Prostate gland (tissue), 2 donors: ENCODE measurements at regions of chr5 and their contacts with region 1.

Region 1: DNA sequence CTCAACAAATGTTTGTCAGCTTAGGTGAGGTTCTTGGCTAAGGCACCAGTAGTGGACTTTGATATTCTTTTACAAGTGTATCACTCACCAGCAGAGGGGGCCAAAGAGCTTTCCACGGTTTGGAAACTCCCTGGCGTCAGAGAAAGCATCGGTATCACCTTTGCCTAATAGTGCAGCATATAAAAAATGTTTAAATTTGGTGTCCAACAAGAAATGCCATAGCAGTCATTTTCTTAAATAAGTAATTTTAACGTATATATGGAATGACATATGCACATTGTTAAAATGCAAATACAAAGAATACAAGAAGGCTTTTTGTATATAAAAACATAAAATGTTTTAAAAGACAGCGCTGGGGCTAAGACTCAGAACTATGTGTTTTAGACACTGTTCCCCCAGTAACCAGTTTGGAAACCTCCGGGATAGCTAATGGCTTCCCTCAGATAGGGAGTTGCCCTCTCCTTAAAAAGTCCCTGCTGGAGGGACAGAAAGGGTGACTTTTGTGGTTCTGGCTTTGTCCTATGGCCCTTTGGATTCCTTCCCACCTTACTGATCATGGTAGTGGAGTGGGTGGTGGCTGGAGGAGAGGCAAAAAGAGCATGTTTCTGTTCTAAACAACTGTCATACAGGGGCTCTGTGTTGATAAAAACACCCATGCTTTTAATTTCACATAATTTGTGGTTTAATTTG is 124.6 kb downstream of the GPBP1 start:
- DNase-seq: peak; percentile 82
- H3K4me3 ChIP-seq: no peak overlapping the region
- H3K27ac ChIP-seq: no peak overlapping the region
- H3K4me1 ChIP-seq: no peaks in the 10 kb centered on the region
- H3K27me3 ChIP-seq: no peaks in the 10 kb centered on the region
- CTCF ChIP-seq: peak; percentile 68 to 84 (median 76)
- POLR2A ChIP-seq: no peak

Region 2: DNA sequence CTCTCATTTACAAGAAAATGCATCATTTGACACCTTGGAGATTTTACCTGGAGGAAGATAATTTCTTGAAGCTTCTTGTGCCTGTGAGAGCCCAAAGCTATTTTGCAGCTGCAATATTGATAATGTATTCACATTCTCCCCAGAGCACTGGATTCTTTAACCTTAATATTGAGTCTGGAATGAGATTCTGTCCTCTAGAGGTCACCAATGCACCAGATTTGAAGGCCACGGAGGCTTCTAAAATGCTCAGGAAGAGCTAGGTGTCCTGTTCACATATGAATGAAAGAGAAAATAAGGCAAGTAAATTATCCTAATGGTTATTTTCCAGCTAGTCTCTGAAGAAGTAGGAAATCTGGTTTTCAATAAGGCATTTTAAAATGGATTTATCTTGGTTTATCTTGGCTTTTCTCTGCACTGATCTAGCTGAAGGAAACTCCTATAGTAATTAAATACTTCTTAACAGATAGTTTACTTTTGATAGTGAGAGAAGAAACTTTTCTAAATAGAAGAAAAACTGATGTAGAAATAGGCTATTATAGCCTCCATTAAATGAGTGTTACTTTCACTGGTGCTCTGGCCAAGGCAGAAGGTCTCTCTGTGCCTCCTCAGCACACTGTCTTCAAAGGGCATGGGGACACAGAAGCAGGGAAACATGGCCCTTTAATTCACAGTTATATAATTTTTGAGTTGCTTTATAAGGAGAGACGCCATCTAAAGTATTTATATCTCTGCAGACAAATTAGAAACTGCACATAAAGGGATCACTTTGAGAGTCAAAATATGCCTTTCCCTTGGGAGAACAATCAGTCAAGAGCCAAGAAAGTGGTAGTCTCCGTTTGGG is 481.2 kb after region 1 on chr5:
- intact Hi-C with region 1: loop called (anchors 5 kb)
- DNase-seq: peak; percentile 36
- H3K4me3 ChIP-seq: no peak overlapping the region
- H3K27ac ChIP-seq: no peak overlapping the region
- H3K4me1 ChIP-seq: no peaks in the 10 kb centered on the region
- H3K27me3 ChIP-seq: no peaks in the 10 kb centered on the region
- CTCF ChIP-seq: peak in 3 of 4 experiments; percentile 57 to 65 (median 60)
- POLR2A ChIP-seq: no peak

Region 3: GRCh38 chr5:57887851-57888621 is 589.6 kb after region 1 on chr5:
- intact Hi-C with region 1: loop called (anchors 10 kb)
- DNase-seq: peak; percentile 39
- H3K4me3 ChIP-seq: no peak overlapping the region
- H3K27ac ChIP-seq: no peak overlapping the region
- H3K4me1 ChIP-seq: no peaks in the 10 kb centered on the region
- H3K27me3 ChIP-seq: no peaks in the 10 kb centered on the region
- CTCF ChIP-seq: peak in 3 of 4 experiments; percentile 29 to 72 (median 63)
- POLR2A ChIP-seq: no peak